ENCODE measurements at regions of chr1 and their contacts with region 1.

Region 1: GRCh38 chr1:231040019-231040799 is at the start of gene FAM89A:
- DNase-seq: peak; percentile 67 to 72
- ATAC-seq: peak; percentile 70 to 87 (median 84)
- H3K4me3 ChIP-seq: peak within 1 kb of the TSS; percentile 44 to 93 (median 80)
- H3K27ac ChIP-seq: peak within 1 kb of the TSS in 9 of 10 donors; percentile 37 to 89 (median 79)
- H3K4me1 ChIP-seq: peaks cover 2 to 38% (median 22%) of the 10 kb centered on the region in 9 donors
- H3K27me3 ChIP-seq: peaks cover 0 to 32% (median 7%) of the 10 kb centered on the region in 7 donors
- CTCF ChIP-seq: no peak
- total RNA-seq, gene FAM89A: 4.1 to 14.3 (median 5.3) TPM

Region 2: GRCh38 chr1:230978491-230979388 is 61.5 kb before region 1 on chr1 and contains the starts of genes ARV1 and TTC13:
- intact Hi-C with region 1: loop called in 1 of 10 experiments (anchors 5 kb)
- DNase-seq: peak; percentile 98
- ATAC-seq: peak; percentile 99 to 100 (median 100)
- H3K4me3 ChIP-seq: peak within 1 kb of the TSS; percentile 65 to 98 (median 80)
- H3K27ac ChIP-seq: peak within 1 kb of the TSS; percentile 72 to 89 (median 78)
- H3K4me1 ChIP-seq: peaks cover 5 to 44% (median 27%) of the 10 kb centered on the region in 9 donors
- H3K27me3 ChIP-seq: no peaks in the 10 kb centered on the region
- CTCF ChIP-seq: peak in 6 of 9 donors; percentile 13 to 47 (median 34)
- total RNA-seq, gene ARV1: 19.8 to 28.3 (median 26.0) TPM
- total RNA-seq, gene TTC13: 4.3 to 9.5 (median 7.3) TPM

Region 3: DNA sequence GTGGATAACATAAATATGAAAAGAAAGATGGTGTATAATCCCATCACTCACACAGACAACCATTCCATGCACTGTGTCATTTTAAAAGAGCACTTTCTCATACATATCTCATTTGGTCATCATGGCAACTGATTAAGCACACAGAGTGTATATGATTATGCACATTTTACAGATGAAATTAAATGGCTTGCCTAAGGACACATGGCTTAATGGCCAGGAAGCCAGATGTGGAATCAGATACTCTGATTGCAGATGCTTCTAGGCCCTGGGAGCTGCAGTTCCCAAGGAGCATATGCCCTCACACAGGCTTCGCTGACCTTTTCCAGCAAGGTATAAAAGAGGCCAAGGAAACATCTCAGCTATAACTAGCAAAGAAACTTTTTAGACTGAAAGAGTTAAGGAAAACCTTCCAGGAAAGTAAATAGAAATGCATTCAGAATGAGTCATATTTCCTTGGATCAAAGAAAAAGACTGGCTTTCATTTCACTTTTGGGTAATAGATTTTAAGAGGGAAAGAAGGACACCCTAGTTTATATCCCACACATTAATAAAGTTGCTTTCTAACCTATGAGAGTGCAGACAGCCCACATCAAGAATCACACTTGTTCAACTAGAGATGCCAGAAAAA is 19.5 kb after region 1 on chr1:
- intact Hi-C with region 1: loop called in 1 of 10 experiments (anchors 2 kb)
- DNase-seq: no peak
- ATAC-seq: no peak
- H3K4me3 ChIP-seq: no peak overlapping the region
- H3K27ac ChIP-seq: no peak overlapping the region
- H3K4me1 ChIP-seq: peaks cover 0 to 34% (median 8%) of the 10 kb centered on the region in 9 donors
- H3K27me3 ChIP-seq: peaks cover 0 to 13% (median 0%) of the 10 kb centered on the region in 7 donors
- CTCF ChIP-seq: no peak